Left cardiac atrium (tissue), 4 donors: ENCODE measurements at regions of chr13 and their contacts with region 1.

Region 1: GRCh38 chr13:94345374-94346195 is 133.9 kb downstream of the DCT start:
- DNase-seq: no peak
- ATAC-seq: peak in 1 of 2 donors; percentile 50

Region 2: DNA sequence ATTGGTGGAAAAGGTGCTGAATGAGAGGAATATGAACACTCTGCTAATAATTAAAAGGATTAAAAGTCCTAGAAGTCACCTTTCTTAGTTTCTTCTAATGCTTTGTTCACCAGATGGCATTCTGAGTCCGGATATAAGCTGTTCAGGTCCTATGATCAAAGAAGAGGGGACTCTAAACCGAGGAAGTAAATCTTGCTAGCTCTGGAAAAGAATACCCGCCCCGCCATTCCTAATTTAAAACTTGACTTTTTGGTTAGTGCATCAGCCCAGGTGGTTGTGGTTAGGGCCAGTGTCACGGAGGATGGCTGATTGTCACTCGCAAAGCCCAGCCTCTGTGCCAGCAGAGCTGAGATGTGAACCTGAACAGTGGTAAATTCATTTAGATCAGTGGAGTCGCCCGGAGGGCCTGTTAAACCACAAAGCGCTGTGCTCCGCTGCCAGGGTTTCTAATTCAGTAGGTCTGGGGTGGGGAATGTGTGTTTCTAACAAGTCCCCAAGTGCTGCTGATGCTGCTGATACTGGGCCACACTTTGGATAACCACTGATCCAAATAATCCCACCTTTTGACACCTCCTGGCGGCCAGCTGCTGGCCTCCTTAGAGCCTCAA is 291.5 kb before region 1 on chr13:
- intact Hi-C with region 1: loop called in 1 of 2 experiments (anchors 10 kb)
- DNase-seq: no peak
- ATAC-seq: no peak

Region 3: GRCh38 chr13:94549232-94550061 is 203.9 kb after region 1 on chr13:
- intact Hi-C with region 1: no loop called
- DNase-seq: peak; percentile 95
- ATAC-seq: peak; percentile 96 to 97